Activated CD4-positive, alpha-beta memory T cell treated with anti-CD3 and anti-CD28 coated beads for 36 hours (primary cell): ENCODE measurements at regions of chr16 and their contacts with region 1.

Region 1: DNA sequence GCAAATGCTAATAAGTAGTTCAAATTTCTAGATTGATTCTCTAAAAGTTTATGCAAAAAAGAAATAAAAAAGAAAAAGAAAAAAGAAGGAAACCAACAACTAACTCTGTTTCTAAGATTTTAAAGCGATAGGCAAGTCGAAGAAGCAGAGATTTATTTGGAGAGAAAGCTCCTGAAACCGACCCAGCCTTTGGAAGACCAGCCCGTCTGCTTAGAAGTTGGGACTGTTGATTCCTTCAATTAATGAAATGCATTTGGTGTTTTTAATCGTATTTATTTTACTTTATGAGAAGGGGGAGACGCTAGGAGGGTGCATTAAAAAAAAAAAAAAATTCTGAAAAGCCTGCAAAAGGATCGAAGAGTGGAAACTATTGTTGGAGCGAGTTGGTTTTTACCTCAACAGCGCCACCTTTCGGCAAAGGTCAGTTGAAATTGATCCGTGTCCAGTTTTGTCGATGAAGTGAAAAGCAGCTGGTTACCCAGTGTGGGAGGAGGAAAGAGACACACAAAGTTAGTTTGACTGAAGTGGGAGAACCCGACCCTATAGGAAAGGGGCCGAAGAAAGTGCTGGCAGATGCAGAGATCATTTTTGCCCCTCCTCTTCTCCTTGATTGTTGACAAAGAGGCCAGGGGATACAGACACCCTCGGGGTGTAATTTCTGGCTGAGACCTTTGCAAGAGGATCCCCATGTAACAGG is 1.5 kb upstream of the MAF start:
- DNase-seq: peak; percentile 92
- H3K4me3 Mint-ChIP-seq: peak overlapping the region; percentile 96
- H3K27ac Mint-ChIP-seq: peak overlapping the region; percentile 98
- H3K4me1 Mint-ChIP-seq: peaks cover 38% of the 10 kb centered on the region
- H3K27me3 Mint-ChIP-seq: peaks cover 3% of the 10 kb centered on the region

Region 2: GRCh38 chr16:78099372-78100161 is 1502.5 kb before region 1 on chr16 and contains the start of gene WWOX:
- CTCF ChIA-PET with region 1: interaction called, 3 read pairs
- POLR2A ChIA-PET with region 1: no interaction called
- intact Hi-C with region 1: loop called (anchors 2 kb)
- DNase-seq: peak; percentile 97
- H3K4me3 Mint-ChIP-seq: peak within 1 kb of the TSS; percentile 86
- H3K27ac Mint-ChIP-seq: peak within 1 kb of the TSS; percentile 91
- H3K4me1 Mint-ChIP-seq: peaks cover 38% of the 10 kb centered on the region
- H3K27me3 Mint-ChIP-seq: peaks cover 5% of the 10 kb centered on the region
- total RNA-seq, gene WWOX: 14.3 to 16.5 TPM

Region 3: GRCh38 chr16:78778101-78779004 is 823.7 kb before region 1 on chr16:
- CTCF ChIA-PET with region 1: interaction called, 3 read pairs
- POLR2A ChIA-PET with region 1: interaction called, 44 read pairs
- intact Hi-C with region 1: loop called (anchors 2 kb)
- DNase-seq: peak; percentile 90
- H3K4me3 Mint-ChIP-seq: peak overlapping the region; percentile 62
- H3K27ac Mint-ChIP-seq: peak overlapping the region; percentile 96
- H3K4me1 Mint-ChIP-seq: peaks cover 94% of the 10 kb centered on the region
- H3K27me3 Mint-ChIP-seq: no peaks in the 10 kb centered on the region

Region 4: GRCh38 chr16:79071424-79071823 is 530.7 kb before region 1 on chr16:
- CTCF ChIA-PET with region 1: interaction called, 4 read pairs
- POLR2A ChIA-PET with region 1: interaction called, 16 read pairs
- intact Hi-C with region 1: loop called (anchors 5 kb)
- DNase-seq: no peak
- H3K4me3 Mint-ChIP-seq: no peak overlapping the region
- H3K27ac Mint-ChIP-seq: peak overlapping the region; percentile 84
- H3K4me1 Mint-ChIP-seq: peaks cover 74% of the 10 kb centered on the region
- H3K27me3 Mint-ChIP-seq: peaks cover 4% of the 10 kb centered on the region

Region 5: GRCh38 chr16:79412783-79413225 is 189.3 kb before region 1 on chr16:
- CTCF ChIA-PET with region 1: no interaction called
- POLR2A ChIA-PET with region 1: no interaction called
- intact Hi-C with region 1: loop called (anchors 5 kb)
- DNase-seq: no peak
- H3K4me3 Mint-ChIP-seq: no peak overlapping the region
- H3K27ac Mint-ChIP-seq: peak overlapping the region; percentile 3
- H3K4me1 Mint-ChIP-seq: peaks cover 41% of the 10 kb centered on the region
- H3K27me3 Mint-ChIP-seq: no peaks in the 10 kb centered on the region

Region 6: DNA sequence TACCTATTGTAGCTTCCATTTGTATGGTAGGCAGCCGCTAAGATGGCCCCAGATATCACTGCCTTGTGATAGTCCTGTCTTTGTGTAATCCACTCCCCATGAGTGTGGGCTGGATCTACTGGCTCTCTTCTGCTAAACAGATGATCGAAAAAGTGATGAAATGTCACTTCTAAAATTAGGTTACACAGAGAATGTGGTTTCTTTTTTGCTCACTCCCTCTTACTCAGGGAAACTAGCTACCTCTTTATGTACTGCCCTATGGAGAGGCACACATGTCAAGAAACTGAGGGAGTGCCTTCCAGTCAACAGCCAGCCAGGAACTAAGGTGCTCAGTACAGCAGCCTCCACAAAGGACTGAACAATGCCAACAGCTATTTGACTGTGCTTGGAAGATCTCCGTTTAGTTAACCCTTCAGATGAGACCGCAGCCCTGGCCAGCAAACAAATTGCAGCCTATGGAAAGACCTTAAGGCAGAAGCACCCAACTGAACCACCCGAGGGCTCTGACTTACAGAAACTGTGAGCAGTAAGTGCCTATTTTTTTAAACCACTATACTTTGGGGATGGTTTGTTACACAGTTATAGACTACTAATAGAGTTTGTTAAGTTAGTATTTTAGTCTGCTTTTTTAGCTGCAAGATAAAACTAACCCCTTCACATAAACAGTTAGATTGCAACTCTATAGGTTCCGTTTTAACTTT is 111.7 kb after region 1 on chr16:
- CTCF ChIA-PET with region 1: interaction called, 7 read pairs
- POLR2A ChIA-PET with region 1: interaction called, 5 read pairs
- intact Hi-C with region 1: loop called (anchors 5 kb)
- DNase-seq: peak; percentile 43
- H3K4me3 Mint-ChIP-seq: peak overlapping the region; percentile 54
- H3K27ac Mint-ChIP-seq: peak overlapping the region; percentile 61
- H3K4me1 Mint-ChIP-seq: peaks cover 25% of the 10 kb centered on the region
- H3K27me3 Mint-ChIP-seq: peaks cover 4% of the 10 kb centered on the region

Region 7: GRCh38 chr16:80014241-80014939 is 412.3 kb after region 1 on chr16:
- CTCF ChIA-PET with region 1: no interaction called
- POLR2A ChIA-PET with region 1: no interaction called
- intact Hi-C with region 1: no loop called
- DNase-seq: no peak
- H3K4me3 Mint-ChIP-seq: no peak overlapping the region
- H3K27ac Mint-ChIP-seq: no peak overlapping the region
- H3K4me1 Mint-ChIP-seq: no peaks in the 10 kb centered on the region
- H3K27me3 Mint-ChIP-seq: peaks cover 7% of the 10 kb centered on the region

Region 8: DNA sequence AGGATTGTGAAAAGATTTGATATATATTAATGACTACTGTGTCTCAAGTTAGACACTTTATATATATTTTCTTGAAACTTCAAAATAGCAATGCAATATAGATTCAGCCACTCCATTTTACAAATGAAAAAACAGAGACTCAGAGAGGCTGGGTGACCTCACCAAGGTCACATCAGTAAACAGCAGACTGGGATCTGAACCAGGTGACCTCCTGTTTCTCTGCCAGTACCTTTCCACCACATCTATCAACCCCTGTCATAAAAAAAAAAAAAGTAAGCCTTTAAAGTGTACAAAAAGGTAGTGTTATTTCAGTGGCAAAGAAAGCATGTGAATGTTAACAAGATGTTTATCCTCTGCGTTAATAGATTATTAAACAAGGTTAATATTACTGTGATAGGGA is 472.2 kb after region 1 on chr16:
- CTCF ChIA-PET with region 1: no interaction called
- POLR2A ChIA-PET with region 1: no interaction called
- intact Hi-C with region 1: no loop called
- DNase-seq: no peak
- H3K4me3 Mint-ChIP-seq: no peak overlapping the region
- H3K27ac Mint-ChIP-seq: no peak overlapping the region
- H3K4me1 Mint-ChIP-seq: no peaks in the 10 kb centered on the region
- H3K27me3 Mint-ChIP-seq: no peaks in the 10 kb centered on the region

Region 9: DNA sequence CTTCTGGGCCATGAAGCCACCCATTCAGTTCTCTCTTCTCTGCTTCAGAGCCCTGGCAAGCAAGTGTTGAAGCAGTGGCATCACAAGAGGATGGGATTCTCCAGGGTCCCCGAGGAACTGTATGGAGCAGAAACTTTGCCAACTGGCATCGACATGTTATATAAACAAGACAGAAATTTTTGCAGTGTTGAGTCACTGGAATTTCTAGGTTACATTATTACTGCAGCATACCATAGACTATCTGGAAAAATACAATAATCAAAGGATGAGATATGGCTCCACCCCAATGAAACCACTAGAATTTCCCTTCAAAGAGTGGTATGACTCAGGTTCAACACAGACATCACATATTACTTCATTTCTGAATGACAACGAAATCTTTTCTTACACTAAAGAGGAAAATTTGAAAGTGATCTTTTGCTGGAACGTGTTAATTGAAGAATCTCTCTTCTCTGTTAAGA is 595.7 kb after region 1 on chr16:
- CTCF ChIA-PET with region 1: no interaction called
- POLR2A ChIA-PET with region 1: no interaction called
- intact Hi-C with region 1: loop called (anchors 5 kb)
- DNase-seq: peak; percentile 10
- H3K4me3 Mint-ChIP-seq: no peak overlapping the region
- H3K27ac Mint-ChIP-seq: peak overlapping the region; percentile 42
- H3K4me1 Mint-ChIP-seq: peaks cover 7% of the 10 kb centered on the region
- H3K27me3 Mint-ChIP-seq: peaks cover 27% of the 10 kb centered on the region